Activated CD4-positive, alpha-beta memory T cell treated with anti-CD3 and anti-CD28 coated beads, Interleukin-2, amount 10 ng/mL, durations not matched to agents 7 days and 5 days (primary cell): ENCODE measurements at regions of chr6 and their contacts with region 1.

Region 1: GRCh38 chr6:28880894-28881780 is 42.6 kb downstream of the TRIM27 start:
- DNase-seq: peak; percentile 57
- H3K4me3 Mint-ChIP-seq: peak overlapping the region; percentile 53
- H3K27ac Mint-ChIP-seq: peak overlapping the region; percentile 29
- H3K4me1 Mint-ChIP-seq: peaks cover 35% of the 10 kb centered on the region
- H3K27me3 Mint-ChIP-seq: peaks cover 43% of the 10 kb centered on the region

Region 2: DNA sequence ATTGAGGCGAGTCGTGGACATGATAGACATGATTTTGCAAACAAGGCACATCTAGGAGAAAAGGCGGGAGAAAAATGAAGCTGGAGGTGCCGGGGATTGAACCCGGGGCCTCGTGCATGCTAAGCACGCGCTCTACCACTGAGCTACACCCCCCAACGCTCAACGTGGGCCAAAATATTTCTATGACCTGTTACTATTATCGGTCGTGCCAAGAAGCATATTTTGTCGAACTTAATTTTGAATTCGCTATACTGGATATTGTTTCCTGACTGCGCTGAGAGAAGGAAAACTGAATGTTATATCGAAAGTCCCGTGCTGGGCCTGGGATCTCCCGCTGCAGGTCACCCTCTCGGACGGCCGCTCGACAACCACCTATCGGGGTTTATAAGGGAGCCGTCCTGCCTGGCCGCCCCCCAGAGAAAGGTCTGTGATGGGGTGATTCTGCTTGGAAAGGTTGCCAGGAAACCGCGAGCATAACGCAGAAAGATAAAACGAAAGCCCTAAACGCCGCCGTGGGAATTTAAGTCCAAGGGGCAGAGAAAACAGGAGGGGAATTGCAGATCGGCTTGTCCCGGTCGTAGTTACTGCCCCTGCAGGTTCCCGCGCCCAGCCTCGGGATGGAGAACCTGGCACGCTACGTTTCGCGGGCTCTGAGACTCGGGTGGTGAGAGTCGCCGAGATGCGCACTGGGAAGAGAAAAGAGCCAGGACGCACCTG is 17.4 kb before region 1 on chr6:
- CTCF ChIA-PET with region 1: interaction called, 3 read pairs
- POLR2A ChIA-PET with region 1: interaction called, 125 read pairs
- DNase-seq: peak; percentile 85
- H3K4me3 Mint-ChIP-seq: peak overlapping the region; percentile 81
- H3K27ac Mint-ChIP-seq: peak overlapping the region; percentile 76
- H3K4me1 Mint-ChIP-seq: peaks cover 46% of the 10 kb centered on the region
- H3K27me3 Mint-ChIP-seq: peaks cover 12% of the 10 kb centered on the region

Region 3: GRCh38 chr6:28895134-28895812 is 14.1 kb after region 1 on chr6:
- CTCF ChIA-PET with region 1: interaction called, 4 read pairs
- POLR2A ChIA-PET with region 1: interaction called, 91 read pairs
- DNase-seq: peak; percentile 95
- H3K4me3 Mint-ChIP-seq: peak overlapping the region; percentile 89
- H3K27ac Mint-ChIP-seq: peak overlapping the region; percentile 99
- H3K4me1 Mint-ChIP-seq: peaks cover 20% of the 10 kb centered on the region
- H3K27me3 Mint-ChIP-seq: peaks cover 2% of the 10 kb centered on the region

Region 4: DNA sequence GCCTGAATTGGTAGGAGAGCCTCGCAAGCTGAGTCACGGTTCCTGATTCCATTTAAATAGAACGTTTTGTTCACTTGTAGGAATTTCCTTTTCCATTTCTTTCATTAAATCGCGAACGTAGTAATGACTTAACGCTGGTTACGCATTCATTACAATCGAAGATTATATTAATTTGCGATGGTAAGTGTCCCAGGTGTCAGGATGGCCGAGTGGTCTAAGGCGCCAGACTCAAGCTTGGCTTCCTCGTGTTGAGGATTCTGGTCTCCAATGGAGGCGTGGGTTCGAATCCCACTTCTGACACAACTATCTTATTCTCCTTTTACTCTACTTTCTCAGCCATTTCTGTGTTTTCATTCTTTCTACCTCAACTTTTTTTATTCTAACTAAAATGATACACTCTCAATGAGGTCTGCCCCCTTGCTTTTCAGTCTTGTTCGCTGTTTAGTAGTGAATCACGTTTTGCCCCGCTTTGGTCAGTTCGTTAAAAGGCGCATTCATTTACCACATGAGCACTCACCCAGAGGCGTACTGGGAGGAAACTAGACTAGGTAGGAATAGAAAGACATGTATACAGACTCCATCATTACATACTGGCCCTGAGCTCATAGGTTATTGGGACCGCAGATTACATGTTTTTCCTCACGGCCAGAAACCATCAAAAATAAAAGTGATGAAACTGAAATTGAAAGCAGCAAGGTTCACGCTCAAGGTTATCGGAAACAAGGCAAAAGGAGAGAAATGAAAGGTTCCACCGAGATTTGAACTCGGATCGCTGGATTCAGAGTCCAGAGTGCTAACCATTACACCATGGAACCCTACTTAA is 59.9 kb after region 1 on chr6:
- CTCF ChIA-PET with region 1: no interaction called
- POLR2A ChIA-PET with region 1: interaction called, 16 read pairs
- DNase-seq: peak; percentile 78
- H3K4me3 Mint-ChIP-seq: peak overlapping the region; percentile 88
- H3K27ac Mint-ChIP-seq: peak overlapping the region; percentile 93
- H3K4me1 Mint-ChIP-seq: peaks cover 51% of the 10 kb centered on the region
- H3K27me3 Mint-ChIP-seq: no peaks in the 10 kb centered on the region

Region 5: GRCh38 chr6:28981833-28982475 is 100.8 kb after region 1 on chr6:
- CTCF ChIA-PET with region 1: no interaction called
- POLR2A ChIA-PET with region 1: interaction called, 10 read pairs
- DNase-seq: peak; percentile 73
- H3K4me3 Mint-ChIP-seq: peak overlapping the region; percentile 86
- H3K27ac Mint-ChIP-seq: peak overlapping the region; percentile 77
- H3K4me1 Mint-ChIP-seq: peaks cover 56% of the 10 kb centered on the region
- H3K27me3 Mint-ChIP-seq: peaks cover 45% of the 10 kb centered on the region